Posterior cingulate gyrus (tissue), 11 donors: ENCODE measurements at regions of chr2 and their contacts with region 1.

Region 1: GRCh38 chr2:85728883-85729824 is 24.6 kb upstream of the ATOH8 start:
- DNase-seq: peak; percentile 76 to 98 (median 91)

Region 2: DNA sequence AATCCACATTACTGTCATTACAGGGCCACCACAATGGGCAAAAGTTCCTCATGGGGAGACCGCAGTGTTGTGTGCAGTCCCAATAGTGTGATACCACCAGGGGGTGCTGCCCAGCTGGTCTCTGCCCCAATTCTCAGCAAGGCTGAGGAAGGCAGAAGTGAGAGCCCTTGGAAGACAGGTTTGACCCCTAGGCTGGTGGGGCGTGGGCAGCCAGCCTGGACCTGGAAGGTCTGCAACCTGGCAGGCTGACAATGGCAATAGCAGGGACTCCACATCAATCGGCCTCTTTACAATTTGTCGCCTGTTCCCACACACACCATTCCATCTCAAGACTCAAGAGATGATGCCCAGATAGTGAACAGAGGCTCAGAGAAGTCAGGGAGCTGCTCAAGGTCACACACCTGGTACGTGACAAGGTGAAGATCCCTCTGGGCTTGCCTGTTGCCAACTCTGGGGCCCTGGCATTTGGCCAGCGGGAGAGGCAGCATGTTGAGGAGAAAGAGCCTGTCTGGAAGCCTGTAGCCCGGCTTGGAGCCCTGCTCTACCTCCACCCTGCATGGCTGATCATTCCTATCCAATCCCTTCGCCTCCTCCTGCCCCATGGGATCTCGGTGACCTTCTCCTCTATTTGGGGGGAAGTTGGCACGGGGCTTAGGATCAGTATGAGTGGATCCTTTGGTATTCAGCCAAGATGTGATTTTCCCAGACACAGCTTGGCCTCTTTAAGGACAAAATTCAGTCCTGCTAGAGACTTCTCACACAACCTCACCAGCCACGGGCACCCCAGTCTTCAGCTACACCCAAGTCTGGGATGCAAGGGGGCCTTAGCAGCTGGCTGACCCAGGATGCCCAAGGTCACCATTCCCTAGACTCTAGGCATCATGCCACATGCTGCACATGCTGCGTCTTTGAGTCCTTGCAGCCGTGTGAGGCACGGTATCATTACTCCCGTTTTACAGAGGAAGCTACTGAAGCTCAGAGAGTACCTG is 21.7 kb after region 1 on chr2:
- intact Hi-C with region 1: loop called (anchors 2 kb)
- DNase-seq: peak in 9 of 10 donors; percentile 57 to 97 (median 83)

Region 3: DNA sequence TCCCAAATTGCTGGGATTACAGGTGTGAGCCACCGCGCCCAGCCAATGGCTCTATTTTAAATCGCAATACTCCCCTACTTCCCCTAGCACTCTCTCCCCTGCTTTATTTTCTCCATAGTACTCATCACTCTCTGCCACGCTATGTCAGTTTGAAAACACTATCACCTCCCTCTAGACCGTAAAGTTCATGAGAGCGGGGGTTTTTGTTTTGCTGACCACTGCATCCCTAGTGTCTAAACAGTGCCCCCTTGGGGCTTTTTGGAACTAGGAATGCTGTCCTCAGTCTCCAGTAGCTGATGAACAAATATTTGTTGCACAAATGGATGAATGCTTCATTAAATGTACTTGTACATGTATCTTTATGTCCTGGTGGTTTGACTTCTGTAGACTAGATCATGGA is 68.8 kb after region 1 on chr2:
- intact Hi-C with region 1: loop called (anchors 5 kb)
- DNase-seq: peak in 4 of 10 donors; percentile 6 to 76 (median 50)

Region 4: DNA sequence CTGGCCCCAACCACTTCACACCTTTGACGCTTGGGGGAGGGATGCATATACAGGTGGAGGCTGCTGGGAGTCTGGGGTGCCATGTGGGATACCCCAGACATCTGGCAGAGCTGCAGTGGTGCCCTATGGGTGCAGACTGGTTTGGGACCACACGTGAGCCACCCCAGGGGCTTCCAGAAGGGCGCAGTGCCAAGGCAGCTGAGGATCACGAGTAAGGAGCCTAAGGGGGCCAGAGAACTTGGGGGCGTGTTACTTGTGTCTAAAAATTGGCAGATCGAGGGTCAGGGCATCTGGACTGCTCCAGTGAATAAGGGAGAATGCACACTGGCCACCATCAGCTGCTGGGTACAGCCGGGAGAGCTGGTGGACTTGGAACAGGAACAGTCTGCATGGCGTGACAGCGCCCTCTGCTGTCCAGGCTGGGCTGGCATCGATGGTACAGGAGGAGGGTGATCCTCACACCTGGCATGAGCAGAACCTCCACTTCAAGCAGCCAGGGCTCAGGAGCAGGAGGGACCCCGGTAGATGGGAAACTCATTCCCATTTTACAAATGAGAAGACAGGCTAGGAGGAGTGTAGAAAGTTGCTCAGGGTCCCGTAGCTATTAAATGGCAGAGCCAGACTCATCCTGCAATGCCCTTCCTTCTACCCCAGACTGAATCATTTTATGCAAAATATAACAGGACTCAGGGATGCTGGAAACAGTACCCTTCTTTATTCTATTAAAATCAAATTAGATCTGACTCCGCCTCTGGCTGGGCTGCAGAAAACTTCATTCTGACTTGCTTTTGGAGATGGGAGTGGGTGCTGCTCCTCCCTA is 85.0 kb after region 1 on chr2:
- intact Hi-C with region 1: loop called (anchors 1 kb)
- DNase-seq: peak; percentile 87 to 99 (median 96)